Endothelial cell of umbilical vein (primary cell): ENCODE measurements at regions of chr12 and their contacts with region 1.

Region 1: DNA sequence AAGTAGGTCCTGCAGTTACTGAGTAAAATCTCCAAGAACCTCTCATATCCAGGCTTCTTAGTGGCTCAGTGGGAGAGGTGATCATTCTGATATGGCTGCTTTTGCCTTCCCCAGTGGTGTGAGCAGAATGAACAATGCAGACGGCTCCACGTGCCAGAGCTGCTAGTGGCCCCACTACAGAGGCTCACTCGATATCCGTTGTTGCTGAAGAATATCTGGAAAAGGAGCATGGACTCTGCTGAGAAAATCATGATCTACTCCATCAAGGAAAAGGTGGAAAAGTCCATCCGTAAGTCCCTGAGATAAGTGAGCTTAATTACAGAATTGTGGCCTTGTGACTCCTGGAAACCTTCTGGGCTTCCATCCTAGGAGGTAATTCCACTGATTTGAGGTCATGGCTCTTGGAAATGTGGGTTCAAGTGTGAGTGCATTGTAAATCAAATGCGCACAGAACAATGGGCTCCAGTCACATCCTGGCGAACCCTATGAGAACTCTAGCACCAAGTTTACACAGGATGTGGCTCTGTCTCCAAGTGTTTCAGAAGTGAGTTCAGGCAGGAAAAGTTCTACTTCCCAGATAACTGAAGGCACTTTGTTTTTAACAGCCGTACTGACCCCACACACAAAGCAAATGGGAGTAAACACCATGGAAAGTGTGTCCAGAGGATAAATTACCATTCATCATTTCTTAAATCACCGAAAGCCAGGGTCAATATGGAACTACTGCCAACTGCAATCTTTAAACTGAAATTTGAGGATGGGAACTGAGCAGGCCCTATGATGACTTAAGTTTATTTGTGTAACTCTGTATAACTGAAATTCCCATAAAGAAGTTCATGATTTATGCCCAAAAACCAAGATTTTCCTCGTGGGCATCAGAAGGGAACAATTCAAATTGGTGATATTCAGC is 51.4 kb downstream of the PLEKHG7 start:
- DNase-seq: peak; percentile 100
- H3K4me3 ChIP-seq: no peak overlapping the region
- H3K27ac ChIP-seq: peak overlapping the region; percentile 72
- H3K4me1 ChIP-seq: peaks cover 28% of the 10 kb centered on the region
- H3K27me3 ChIP-seq: no peaks in the 10 kb centered on the region
- CTCF ChIP-seq: no peak
- POLR2A ChIP-seq: no peak

Region 2: GRCh38 chr12:92769124-92769901 is 15.1 kb after region 1 on chr12:
- CTCF ChIA-PET with region 1: interaction called, 6 read pairs
- POLR2A ChIA-PET with region 1: no interaction called
- dilution Hi-C with region 1: no loop called
- intact Hi-C with region 1: loop called (anchors 2 kb)
- DNase-seq: peak; percentile 91
- H3K4me3 ChIP-seq: no peak overlapping the region
- H3K27ac ChIP-seq: peak overlapping the region; percentile 61
- H3K4me1 ChIP-seq: peaks cover 28% of the 10 kb centered on the region
- H3K27me3 ChIP-seq: no peaks in the 10 kb centered on the region
- CTCF ChIP-seq: no peak
- POLR2A ChIP-seq: peak; percentile 43

Region 3: DNA sequence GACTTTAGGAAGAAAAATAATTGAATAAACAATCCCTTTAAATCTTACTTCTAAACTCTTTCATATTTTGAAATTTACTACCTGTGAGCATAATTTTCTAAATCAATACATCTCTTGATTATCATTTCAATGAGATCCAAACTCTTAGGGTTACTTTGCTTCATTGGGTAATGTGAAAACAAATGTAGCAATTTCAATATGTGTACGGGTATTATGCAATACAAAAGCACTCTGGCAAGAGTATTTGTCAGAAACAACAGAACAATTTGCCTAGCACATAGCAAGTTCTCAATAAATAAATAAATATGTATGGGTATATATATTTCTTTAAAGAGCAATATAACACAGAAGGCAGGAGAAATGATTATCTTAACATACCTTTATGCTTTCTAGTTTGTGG is 25.7 kb after region 1 on chr12:
- CTCF ChIA-PET with region 1: interaction called, 11 read pairs
- POLR2A ChIA-PET with region 1: no interaction called
- dilution Hi-C with region 1: no loop called
- intact Hi-C with region 1: loop called (anchors 1 kb)
- DNase-seq: no peak
- H3K4me3 ChIP-seq: no peak overlapping the region
- H3K27ac ChIP-seq: no peak overlapping the region
- H3K4me1 ChIP-seq: peaks cover 4% of the 10 kb centered on the region
- H3K27me3 ChIP-seq: no peaks in the 10 kb centered on the region
- CTCF ChIP-seq: no peak
- POLR2A ChIP-seq: no peak